Posterior cingulate gyrus (tissue), 11 donors: ENCODE measurements at regions of chr1 and their contacts with region 1.

Region 1: GRCh38 chr1:35202048-35202719 is 9.2 kb upstream of the SFPQ start:
- DNase-seq: peak in 9 of 10 donors; percentile 45 to 95 (median 74)

Region 2: GRCh38 chr1:35079003-35079930 is 122.9 kb before region 1 on chr1 and contains the start of gene ZMYM1:
- intact Hi-C with region 1: no loop called
- DNase-seq: peak; percentile 76 to 97 (median 86)

Region 3: GRCh38 chr1:35220976-35221375 is 18.8 kb after region 1 on chr1:
- intact Hi-C with region 1: no loop called
- DNase-seq: no peak

Region 4: DNA sequence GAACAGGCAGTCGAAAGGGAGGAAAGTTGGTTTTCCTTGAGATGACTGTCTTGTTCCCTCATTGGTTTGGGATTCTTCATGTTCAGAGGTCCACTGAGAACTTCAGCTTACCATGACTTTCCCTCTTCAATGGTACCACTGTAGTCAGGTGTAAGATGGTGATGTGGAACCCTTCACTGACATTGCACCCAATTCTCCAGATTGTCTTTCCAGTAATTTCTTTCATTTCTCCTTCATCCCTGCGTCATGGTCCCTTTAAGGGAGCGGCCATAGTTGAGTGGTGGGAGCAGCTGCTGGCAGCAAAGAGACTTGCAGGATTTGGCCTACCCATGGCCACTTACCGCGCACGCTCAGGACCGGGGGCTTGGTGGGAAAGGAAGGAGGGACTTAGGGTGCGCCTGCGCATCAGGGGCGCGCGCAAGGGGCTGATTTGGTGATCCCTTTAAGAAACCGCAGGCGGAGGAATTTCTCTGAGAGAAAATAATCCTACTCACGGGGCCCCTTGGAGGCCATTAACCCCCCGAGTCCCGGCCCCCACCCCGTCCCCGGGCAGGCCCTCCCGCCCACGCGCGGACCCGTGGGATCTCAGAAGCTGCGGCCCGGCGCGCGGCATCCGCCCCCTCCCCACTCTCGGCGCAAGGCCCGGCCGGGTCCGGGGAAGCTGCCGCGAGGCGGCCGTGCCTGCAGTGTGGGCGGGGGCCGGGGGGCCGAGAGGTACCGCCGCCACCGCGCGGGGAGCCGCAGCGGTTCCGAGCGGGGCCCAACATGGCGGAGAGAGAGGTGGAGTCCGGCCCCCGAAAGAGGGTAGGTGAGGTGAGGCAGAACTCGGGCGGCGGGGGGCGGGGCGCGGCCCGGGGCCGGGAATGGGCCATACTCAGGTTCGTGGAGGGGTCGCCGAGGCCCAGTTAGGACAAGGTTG is 66.4 kb after region 1 on chr1 and contains the start of gene ZMYM4:
- intact Hi-C with region 1: loop called (anchors 10 kb)
- DNase-seq: peak; percentile 76 to 98 (median 88)

Region 5: DNA sequence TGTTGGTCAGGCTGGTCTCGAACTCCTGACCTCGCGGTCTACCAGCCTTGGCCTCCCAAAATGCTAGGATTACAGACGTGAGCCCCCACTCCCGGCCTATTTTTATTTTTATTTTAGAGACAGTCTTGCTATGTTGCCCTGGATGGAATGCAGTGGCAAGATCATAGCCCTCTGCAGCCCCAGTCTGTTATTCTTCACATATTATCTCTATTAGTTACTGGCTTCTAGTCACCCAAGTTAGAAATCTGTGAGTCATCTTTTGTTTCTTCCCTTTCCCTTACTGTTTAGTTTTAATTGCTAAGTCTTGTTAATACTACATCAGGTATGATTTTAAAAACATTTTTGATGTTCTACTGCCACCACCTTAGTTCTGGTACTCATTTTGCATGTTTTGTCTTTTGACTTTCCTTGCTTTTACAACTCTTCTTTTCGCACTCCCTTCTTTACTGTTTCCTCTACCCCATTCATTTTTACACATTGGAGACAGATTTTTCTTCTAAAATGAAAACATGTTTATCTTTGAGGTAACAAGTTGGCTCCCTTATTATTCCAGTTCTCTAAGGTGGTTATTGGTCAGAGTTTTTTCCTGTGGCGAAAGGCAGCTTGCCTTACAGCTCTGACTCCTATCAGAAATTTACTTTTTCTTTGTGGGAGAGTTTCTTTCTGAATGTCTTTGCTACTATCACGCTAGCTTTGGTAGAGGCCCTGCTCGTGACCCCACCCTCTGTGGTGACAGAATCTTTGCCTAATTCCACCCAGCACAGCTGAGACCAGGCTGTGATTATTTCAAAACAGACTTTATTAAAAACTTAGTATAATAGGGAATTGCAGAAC is 85.8 kb after region 1 on chr1:
- intact Hi-C with region 1: no loop called
- DNase-seq: no peak

Region 6: GRCh38 chr1:35298464-35298863 is 96.3 kb after region 1 on chr1:
- intact Hi-C with region 1: loop called (anchors 1 kb)
- DNase-seq: peak in 1 of 10 donors; percentile 18